ENCODE measurements at regions of chrX and their contacts with region 1.

Region 1: DNA sequence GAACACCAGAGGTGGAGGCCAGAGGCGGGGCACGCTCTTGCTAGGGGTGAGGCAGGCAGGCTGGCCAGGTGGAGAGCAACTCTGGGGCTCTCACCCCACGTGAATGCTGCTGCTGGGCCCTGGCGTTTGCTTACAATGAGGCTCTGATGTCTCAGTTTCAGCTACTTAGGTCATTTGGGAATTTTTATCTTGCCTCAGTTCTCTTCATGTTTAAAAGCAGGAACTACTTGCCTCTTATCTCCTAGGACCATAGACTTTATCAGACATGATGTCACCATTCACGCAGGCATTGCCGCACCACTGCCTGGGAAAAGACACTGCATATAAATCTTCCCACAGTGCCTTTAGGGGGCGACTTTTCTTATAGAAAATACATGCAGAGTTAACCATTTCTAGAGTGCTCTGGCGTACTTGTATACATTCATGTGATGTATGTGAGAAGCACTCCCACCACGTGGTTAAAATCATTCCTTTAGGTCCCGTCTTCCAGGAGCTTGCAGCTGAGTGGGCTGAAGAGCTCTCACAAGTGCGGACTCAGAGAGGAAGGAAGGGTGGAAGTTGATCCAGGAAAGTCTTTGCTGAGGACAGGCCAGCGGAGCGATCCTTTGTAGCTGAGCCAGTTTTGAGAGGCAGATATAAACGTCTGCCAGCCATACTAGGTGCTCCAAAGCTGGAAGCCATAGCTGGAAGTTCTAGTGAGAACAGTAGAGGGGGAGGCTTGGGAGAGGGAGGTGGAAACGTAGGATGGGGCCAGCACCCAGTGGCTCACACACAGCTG is 84.3 kb upstream of the CLDN34 start:
- DNase-seq: no peak
- ATAC-seq: no peak
- H3K4me3 ChIP-seq: no peak overlapping the region
- H3K4me1 ChIP-seq: no peaks in the 10 kb centered on the region
- CTCF ChIP-seq: no peak

Region 2: GRCh38 chrX:9966775-9967408 is 84.0 kb after region 1 on chrX and contains the start of gene CLDN34:
- intact Hi-C with region 1: no loop called
- DNase-seq: no peak
- ATAC-seq: no peak
- H3K4me3 ChIP-seq: no peak within 1 kb of the TSS
- H3K4me1 ChIP-seq: no peaks in the 10 kb centered on the region
- CTCF ChIP-seq: no peak
- total RNA-seq, gene CLDN34: 0.49 TPM in 1 of 3 donors, not detected in the others

Region 3: DNA sequence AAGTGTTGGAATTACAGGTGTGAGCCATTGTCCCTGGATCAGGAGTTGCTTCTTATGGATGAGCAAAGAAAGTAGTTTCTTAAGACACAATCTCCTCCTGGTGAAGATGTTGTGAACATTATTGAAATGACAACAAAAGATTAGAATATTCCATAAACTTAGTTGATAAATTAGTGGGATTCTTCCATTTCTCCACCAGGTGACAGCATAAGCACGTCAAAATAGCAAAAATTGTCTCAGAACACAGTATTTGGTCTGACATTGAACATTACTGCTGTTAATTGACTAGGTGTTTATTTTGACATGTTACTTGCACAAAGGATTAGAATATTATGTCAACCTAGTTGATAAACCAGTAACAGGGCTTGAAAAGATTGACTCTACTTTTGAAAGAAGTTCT is 105.9 kb after region 1 on chrX:
- intact Hi-C with region 1: loop called in 1 of 2 experiments (anchors 5 kb)
- DNase-seq: no peak
- ATAC-seq: no peak
- H3K4me3 ChIP-seq: no peak overlapping the region
- H3K4me1 ChIP-seq: no peaks in the 10 kb centered on the region
- CTCF ChIP-seq: no peak

Region 4: DNA sequence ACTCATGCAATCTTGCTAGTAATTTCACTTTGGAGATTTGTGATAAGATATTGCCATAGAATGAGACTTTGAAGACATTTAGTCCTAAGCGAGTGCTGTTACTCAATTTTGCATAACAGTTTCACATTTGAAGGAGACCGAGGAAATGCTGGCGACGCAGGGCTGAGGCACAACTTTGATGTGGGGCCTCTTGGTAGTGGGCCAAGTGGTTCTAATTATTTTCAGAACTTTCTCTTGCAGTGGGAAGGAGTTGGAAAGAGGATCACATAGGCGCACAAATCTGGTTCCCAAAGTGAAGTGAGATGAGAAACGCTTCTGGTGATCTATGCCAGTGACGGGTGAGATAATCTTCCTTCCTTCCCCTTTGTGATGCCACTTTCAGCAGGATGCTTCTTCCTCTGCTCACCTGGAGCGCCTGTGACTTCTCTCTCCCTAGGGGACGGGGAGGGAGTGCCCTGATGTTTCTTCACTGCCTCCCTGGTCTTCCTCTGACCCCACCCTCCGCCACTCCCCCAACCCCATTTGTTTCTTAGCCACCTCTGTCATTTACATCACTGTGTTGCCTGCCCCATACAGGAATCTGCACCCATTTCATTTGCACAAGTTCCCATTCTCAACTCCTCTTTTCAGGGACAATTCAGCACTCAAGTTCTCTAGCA is 876.4 kb after region 1 on chrX:
- intact Hi-C with region 1: no loop called
- DNase-seq: no peak
- ATAC-seq: no peak
- H3K4me3 ChIP-seq: no peak overlapping the region
- H3K4me1 ChIP-seq: no peaks in the 10 kb centered on the region
- CTCF ChIP-seq: no peak

Measured in mucosa of descending colon (tissue), 3 donors.